Activated CD8-positive, alpha-beta T cell treated with anti-CD3 and anti-CD28 coated beads for 36 hours (primary cell): ENCODE measurements at regions of chr17 and their contacts with region 1.

Region 1: GRCh38 chr17:17919169-17920107 is 52.8 kb downstream of the TOM1L2 start:
- DNase-seq: peak; percentile 82
- ATAC-seq: peak; percentile 94
- H3K4me3 Mint-ChIP-seq: no peak overlapping the region
- H3K27ac Mint-ChIP-seq: no peak overlapping the region
- H3K4me1 Mint-ChIP-seq: peaks cover 15% of the 10 kb centered on the region
- H3K27me3 Mint-ChIP-seq: no peaks in the 10 kb centered on the region
- CTCF ChIP-seq: peak; percentile 73

Region 2: GRCh38 chr17:17681187-17681848 is 238.1 kb before region 1 on chr17 and contains the start of gene RAI1:
- CTCF ChIA-PET with region 1: interaction called, 17 read pairs
- POLR2A ChIA-PET with region 1: no interaction called
- intact Hi-C with region 1: no loop called
- DNase-seq: peak; percentile 73
- ATAC-seq: peak; percentile 65
- H3K4me3 Mint-ChIP-seq: peak within 1 kb of the TSS; percentile 80
- H3K27ac Mint-ChIP-seq: peak within 1 kb of the TSS; percentile 91
- H3K4me1 Mint-ChIP-seq: peaks cover 37% of the 10 kb centered on the region
- H3K27me3 Mint-ChIP-seq: no peaks in the 10 kb centered on the region
- CTCF ChIP-seq: peak; percentile 60
- total RNA-seq, gene RAI1: 18.1 to 20.3 TPM

Region 3: GRCh38 chr17:17812211-17813057 is 107.0 kb before region 1 on chr17:
- CTCF ChIA-PET with region 1: interaction called, 16 read pairs
- POLR2A ChIA-PET with region 1: no interaction called
- intact Hi-C with region 1: no loop called
- DNase-seq: peak; percentile 74
- ATAC-seq: peak; percentile 59
- H3K4me3 Mint-ChIP-seq: no peak overlapping the region
- H3K27ac Mint-ChIP-seq: peak overlapping the region; percentile 75
- H3K4me1 Mint-ChIP-seq: peaks cover 22% of the 10 kb centered on the region
- H3K27me3 Mint-ChIP-seq: no peaks in the 10 kb centered on the region
- CTCF ChIP-seq: peak; percentile 99

Region 4: DNA sequence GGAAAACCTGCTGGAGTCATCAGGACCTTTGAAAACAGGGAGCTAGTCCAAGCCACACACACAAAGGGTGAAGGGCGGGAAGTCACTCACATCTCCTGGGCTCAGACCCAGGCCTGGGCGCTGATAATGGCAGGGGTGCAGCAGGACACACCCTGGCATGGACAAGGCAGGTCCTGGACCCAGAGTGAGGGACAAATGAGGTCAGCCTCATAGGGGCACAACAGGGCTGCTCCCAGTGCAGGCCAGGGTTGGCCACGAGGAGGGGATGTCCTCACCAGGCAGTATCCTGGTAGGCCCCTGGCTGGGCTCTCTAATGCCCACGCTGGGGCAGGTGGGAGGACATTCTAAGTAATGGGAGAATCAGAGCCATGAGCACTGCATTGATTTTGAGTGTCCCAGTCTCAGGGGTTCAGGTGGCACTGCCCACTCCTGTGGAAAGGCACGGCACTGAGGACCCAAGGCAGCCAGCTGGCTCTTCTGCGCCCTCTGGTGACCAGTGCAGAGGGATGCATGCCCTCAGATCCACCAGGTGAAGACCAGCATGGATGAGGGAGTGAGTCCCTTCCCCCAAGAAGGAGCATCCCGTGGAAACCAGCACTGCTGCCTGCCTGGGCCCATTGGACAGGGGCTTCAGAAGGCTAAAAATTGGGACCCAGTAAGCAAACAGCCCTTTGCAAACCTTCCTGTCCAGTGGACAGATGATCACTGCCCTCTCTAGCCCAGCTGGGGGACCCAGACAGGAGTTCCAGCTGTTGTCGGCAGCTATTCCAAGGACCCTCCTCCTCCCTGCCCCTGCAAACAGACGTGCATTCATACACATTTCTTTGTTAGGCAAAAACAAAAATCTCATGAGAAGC is 59.3 kb before region 1 on chr17:
- CTCF ChIA-PET with region 1: interaction called, 14 read pairs
- POLR2A ChIA-PET with region 1: no interaction called
- intact Hi-C with region 1: no loop called
- DNase-seq: peak; percentile 74
- ATAC-seq: peak; percentile 91
- H3K4me3 Mint-ChIP-seq: no peak overlapping the region
- H3K27ac Mint-ChIP-seq: no peak overlapping the region
- H3K4me1 Mint-ChIP-seq: peaks cover 30% of the 10 kb centered on the region
- H3K27me3 Mint-ChIP-seq: no peaks in the 10 kb centered on the region
- CTCF ChIP-seq: peak; percentile 97

Region 5: GRCh38 chr17:17890773-17891759 is 28.4 kb before region 1 on chr17:
- CTCF ChIA-PET with region 1: interaction called, 27 read pairs
- POLR2A ChIA-PET with region 1: no interaction called
- intact Hi-C with region 1: no loop called
- DNase-seq: peak; percentile 61
- ATAC-seq: peak; percentile 97
- H3K4me3 Mint-ChIP-seq: no peak overlapping the region
- H3K27ac Mint-ChIP-seq: no peak overlapping the region
- H3K4me1 Mint-ChIP-seq: peaks cover 6% of the 10 kb centered on the region
- H3K27me3 Mint-ChIP-seq: no peaks in the 10 kb centered on the region
- CTCF ChIP-seq: peak; percentile 58

Region 6: GRCh38 chr17:17933775-17934174 is 14.3 kb after region 1 on chr17:
- CTCF ChIA-PET with region 1: interaction called, 23 read pairs
- POLR2A ChIA-PET with region 1: no interaction called
- intact Hi-C with region 1: no loop called
- DNase-seq: no peak
- ATAC-seq: peak; percentile 30
- H3K4me3 Mint-ChIP-seq: no peak overlapping the region
- H3K27ac Mint-ChIP-seq: no peak overlapping the region
- H3K4me1 Mint-ChIP-seq: peaks cover 30% of the 10 kb centered on the region
- H3K27me3 Mint-ChIP-seq: no peaks in the 10 kb centered on the region
- CTCF ChIP-seq: no peak

Region 7: GRCh38 chr17:18033442-18034099 is 114.1 kb after region 1 on chr17:
- CTCF ChIA-PET with region 1: interaction called, 23 read pairs
- POLR2A ChIA-PET with region 1: no interaction called
- intact Hi-C with region 1: no loop called
- DNase-seq: peak; percentile 76
- ATAC-seq: peak; percentile 72
- H3K4me3 Mint-ChIP-seq: no peak overlapping the region
- H3K27ac Mint-ChIP-seq: no peak overlapping the region
- H3K4me1 Mint-ChIP-seq: peaks cover 34% of the 10 kb centered on the region
- H3K27me3 Mint-ChIP-seq: no peaks in the 10 kb centered on the region
- CTCF ChIP-seq: peak; percentile 80